Panc1 (cell line): ENCODE measurements at regions of chr14 and their contacts with region 1.

Region 1: DNA sequence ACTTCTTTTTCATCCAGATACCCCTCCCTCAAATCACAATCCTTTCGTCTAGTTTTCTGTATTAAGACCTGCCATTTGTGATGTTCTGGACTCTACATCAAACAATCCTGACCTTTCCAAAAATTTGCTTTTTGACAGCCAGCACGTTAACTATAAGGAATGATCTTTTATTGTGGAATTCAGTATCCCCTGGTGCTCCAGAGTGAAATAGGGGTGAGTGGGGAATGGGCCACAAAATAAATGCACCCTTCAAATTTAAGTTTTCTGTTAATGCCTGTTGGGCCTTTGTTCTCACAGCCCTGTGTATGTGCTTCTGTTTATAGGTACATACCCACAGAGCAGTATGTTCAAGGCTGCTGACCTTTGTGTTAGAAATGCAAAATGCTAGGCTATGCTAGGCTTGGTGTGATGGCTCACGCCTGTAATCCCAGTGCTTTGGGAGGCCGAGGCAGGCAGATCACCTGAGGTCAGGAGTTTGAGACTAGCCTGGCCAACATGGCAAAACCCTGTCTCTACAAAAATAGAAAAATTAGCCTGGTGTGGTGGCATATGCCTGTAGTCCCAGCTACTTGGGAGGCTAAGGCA is 12.0 kb downstream of the PNN start:
- DNase-seq: no peak
- ATAC-seq: peak; percentile 60
- H3K4me3 ChIP-seq: no peak overlapping the region
- H3K27ac ChIP-seq: no peak overlapping the region
- H3K4me1 ChIP-seq: peaks cover 5% of the 10 kb centered on the region
- H3K27me3 ChIP-seq: no peaks in the 10 kb centered on the region
- CTCF ChIP-seq: no peak

Region 2: GRCh38 chr14:38910092-38910491 is 276.9 kb before region 1 on chr14:
- CTCF ChIA-PET with region 1: no interaction called
- POLR2A ChIA-PET with region 1: no interaction called
- in situ Hi-C with region 1: no loop called
- intact Hi-C with region 1: no loop called
- DNase-seq: no peak
- ATAC-seq: no peak
- H3K4me3 ChIP-seq: no peak overlapping the region
- H3K27ac ChIP-seq: no peak overlapping the region
- H3K4me1 ChIP-seq: no peaks in the 10 kb centered on the region
- H3K27me3 ChIP-seq: no peaks in the 10 kb centered on the region
- CTCF ChIP-seq: no peak

Region 3: GRCh38 chr14:39174560-39175444 is 12.2 kb before region 1 on chr14 and contains the start of gene PNN:
- CTCF ChIA-PET with region 1: interaction called, 3 read pairs
- POLR2A ChIA-PET with region 1: interaction called, 10 read pairs
- in situ Hi-C with region 1: no loop called
- intact Hi-C with region 1: no loop called
- DNase-seq: peak; percentile 97
- ATAC-seq: peak; percentile 95
- H3K4me3 ChIP-seq: peak within 1 kb of the TSS; percentile 92 to 95
- H3K27ac ChIP-seq: peak within 1 kb of the TSS; percentile 97
- H3K4me1 ChIP-seq: peaks cover 22% of the 10 kb centered on the region
- H3K27me3 ChIP-seq: no peaks in the 10 kb centered on the region
- CTCF ChIP-seq: no peak
- total RNA-seq, gene PNN: 55.4 TPM

Region 4: DNA sequence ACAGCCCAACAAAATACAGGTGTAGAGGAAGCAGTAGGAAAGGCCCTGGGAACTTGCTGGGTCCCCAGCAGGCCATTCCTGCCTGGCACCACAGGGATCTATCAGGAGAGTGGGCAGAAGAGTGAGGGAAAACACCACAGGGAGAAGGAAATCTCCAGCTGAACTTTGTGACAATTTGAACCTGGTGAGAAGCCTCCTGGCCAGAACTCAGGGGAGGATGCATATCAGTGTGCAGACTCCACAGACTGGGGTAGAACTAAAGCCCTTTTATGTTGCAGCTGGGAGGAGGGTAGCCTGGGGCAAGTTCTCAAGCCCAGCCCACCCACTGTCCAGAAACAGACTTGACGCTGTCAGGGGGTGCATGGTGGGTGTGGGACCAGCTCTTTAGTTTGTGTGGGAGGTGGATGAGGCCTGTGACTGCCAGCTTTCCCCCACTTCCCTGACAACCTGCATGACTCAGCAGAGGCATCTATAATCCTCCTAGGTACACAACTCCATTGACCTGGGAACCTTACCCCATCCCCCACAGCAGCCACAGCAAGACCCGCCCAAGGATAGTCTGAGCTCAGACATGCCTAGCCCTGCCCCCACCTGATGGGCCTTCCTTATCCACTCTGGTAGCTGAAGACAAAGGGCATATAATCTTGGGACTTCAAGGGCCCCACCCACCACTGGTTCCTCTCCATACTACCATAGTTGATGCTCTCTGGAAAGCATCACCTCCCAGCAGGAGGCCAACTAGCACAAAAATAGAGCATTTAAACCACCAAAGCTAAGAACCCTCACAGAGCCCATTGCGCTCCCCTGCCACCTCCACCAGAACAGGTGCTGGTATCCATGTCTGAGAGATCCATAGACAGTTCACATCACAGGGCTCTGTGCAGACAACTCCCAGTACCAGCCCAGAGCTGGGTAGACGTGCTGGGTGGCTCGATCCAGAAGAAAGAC is 16.9 kb after region 1 on chr14:
- CTCF ChIA-PET with region 1: no interaction called
- POLR2A ChIA-PET with region 1: no interaction called
- in situ Hi-C with region 1: no loop called
- intact Hi-C with region 1: no loop called
- DNase-seq: no peak
- ATAC-seq: peak; percentile 42; the same call in 1 of the 2 replicates
- H3K4me3 ChIP-seq: no peak overlapping the region
- H3K27ac ChIP-seq: peak overlapping the region; percentile 23; the same call in 1 of the 2 replicates
- H3K4me1 ChIP-seq: no peaks in the 10 kb centered on the region
- H3K27me3 ChIP-seq: no peaks in the 10 kb centered on the region
- CTCF ChIP-seq: no peak